Right cardiac atrium (tissue), 5 donors: ENCODE measurements at regions of chr2 and their contacts with region 1.

Region 1: GRCh38 chr2:22340716-22341115 is 1044.3 kb upstream of the KLHL29 start:
- DNase-seq: no peak
- ATAC-seq: no peak
- H3K4me3 ChIP-seq: no peak overlapping the region
- H3K27ac ChIP-seq: no peak overlapping the region
- H3K4me1 ChIP-seq: no peaks in the 10 kb centered on the region
- H3K27me3 ChIP-seq: no peaks in the 10 kb centered on the region

Region 2: DNA sequence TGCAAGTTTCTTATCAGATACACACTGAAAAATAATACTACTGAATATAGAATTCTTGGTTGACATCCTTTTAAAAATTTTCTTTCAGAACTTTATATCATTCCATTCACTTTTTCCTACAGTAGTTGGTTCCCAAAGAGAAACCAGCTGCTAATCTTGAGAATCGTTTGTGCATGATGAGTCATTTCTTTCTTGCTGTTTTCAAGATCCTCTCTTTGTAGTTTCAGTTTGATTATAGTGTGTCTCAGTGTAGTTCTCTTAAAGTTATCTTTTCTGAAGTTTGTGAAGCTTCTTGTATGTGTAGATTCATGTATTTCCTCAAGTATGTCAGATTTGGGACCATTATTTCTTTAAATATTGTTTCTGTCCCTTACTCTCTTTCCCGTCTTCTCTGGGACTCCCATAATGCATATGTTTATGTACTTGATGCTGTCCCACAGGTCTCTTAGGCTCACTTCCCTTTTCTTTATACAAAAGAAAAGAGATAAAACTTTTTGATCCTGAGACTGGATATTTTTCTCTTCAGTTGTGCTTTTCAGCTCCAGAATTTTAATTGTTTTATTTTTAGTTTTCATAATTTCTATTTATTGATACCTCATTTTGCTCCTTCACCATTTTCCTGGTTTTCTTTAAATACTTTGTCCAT is 416.0 kb before region 1 on chr2:
- intact Hi-C with region 1: no loop called
- DNase-seq: no peak
- ATAC-seq: no peak
- H3K4me3 ChIP-seq: no peak overlapping the region
- H3K27ac ChIP-seq: no peak overlapping the region
- H3K4me1 ChIP-seq: no peaks in the 10 kb centered on the region
- H3K27me3 ChIP-seq: no peaks in the 10 kb centered on the region

Region 3: DNA sequence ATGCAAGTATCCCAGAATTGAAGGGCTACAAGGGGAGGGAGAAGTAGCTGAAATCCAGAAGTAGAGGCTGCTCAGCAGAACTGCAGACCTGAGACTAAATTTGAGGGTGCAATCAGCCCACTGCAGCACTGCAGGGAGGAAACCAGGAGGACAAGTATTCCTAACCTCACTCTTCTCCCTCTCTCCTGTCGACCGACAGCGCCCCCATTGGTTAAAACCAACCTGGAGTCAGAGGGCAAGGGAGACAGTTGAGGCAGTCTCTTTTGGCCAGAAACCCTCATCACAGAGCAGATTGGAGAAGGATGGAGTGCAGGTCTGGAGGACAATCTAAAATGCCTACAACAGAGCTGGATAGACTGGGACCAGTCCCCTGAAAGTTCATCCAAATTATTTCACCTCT is 275.3 kb after region 1 on chr2:
- intact Hi-C with region 1: loop called in 1 of 4 experiments (anchors 10 kb)
- DNase-seq: no peak
- ATAC-seq: no peak
- H3K4me3 ChIP-seq: no peak overlapping the region
- H3K27ac ChIP-seq: no peak overlapping the region
- H3K4me1 ChIP-seq: no peaks in the 10 kb centered on the region
- H3K27me3 ChIP-seq: peaks cover 3% of the 10 kb centered on the region

Region 4: DNA sequence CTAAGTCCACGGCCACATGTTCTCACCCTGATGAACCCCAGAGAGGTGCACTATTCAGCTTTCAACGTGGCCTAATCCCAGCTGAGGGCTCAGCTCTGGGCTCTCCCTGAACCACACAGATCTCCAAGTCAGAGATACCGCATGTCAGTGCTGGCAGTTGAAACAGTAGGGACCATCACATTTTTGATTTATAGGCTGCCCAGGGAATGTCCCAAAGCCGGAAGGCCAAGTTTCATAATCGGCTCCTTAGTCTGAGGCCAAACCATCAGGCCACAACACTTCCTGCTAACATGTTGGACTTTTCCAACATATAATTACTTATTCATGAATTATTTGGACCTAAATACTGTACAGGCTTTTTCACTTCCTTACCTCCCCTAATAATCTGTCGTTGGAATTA is 952.3 kb after region 1 on chr2:
- intact Hi-C with region 1: no loop called
- DNase-seq: peak; percentile 25 to 68 (median 60)
- ATAC-seq: peak; percentile 41 to 69
- H3K4me3 ChIP-seq: no peak overlapping the region
- H3K27ac ChIP-seq: no peak overlapping the region
- H3K4me1 ChIP-seq: no peaks in the 10 kb centered on the region
- H3K27me3 ChIP-seq: no peaks in the 10 kb centered on the region